ENCODE measurements at regions of chr15 and their contacts with region 1.

Region 1: DNA sequence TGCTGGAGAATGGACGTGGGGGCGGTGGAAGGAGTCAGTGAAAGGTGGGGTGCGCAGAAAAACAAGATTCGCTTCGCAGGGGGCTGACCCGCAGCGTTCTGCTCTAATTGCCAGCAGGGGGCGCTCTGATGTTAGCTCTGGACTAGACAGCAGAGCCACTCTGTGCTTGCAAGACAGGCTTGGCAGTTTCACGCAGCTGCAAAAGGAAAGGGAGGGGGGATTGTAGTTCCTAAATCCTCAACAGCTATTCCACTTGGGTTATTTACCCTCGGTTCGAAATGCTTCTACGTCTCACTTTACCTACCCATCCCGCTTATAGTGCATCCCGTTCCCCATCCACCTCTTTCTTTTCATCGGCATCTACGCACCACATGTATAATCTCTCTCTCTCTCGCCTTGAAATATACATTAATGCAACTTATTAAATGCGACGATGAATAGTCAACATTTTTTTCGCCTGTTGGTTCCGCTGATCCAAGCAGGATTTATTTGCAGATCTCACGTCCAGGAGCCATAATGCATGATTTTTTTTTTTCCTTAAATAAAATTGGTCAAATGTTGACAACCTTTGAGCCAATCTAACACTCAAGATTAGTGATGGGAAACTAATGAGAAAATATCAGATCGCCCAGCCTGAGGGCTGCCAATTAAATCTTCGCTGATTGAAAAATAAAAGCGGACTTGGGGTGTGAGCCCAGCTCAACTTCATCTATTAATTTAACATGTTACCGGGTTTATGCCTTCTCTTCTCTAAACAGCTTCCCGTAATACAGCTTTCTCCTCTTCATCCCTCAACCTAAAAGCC is 216.4 kb downstream of the MEIS2 start:
- DNase-seq: peak in 1 of 2 donors; percentile 88
- H3K4me3 ChIP-seq: peak overlapping the region; percentile 40 to 47
- H3K27ac ChIP-seq: no peak overlapping the region
- H3K4me1 ChIP-seq: peaks cover 0 to 6% of the 10 kb centered on the region in 2 donors
- H3K27me3 ChIP-seq: no peaks in the 10 kb centered on the region
- CTCF ChIP-seq: peak; percentile 78 to 86 (median 80)

Region 2: DNA sequence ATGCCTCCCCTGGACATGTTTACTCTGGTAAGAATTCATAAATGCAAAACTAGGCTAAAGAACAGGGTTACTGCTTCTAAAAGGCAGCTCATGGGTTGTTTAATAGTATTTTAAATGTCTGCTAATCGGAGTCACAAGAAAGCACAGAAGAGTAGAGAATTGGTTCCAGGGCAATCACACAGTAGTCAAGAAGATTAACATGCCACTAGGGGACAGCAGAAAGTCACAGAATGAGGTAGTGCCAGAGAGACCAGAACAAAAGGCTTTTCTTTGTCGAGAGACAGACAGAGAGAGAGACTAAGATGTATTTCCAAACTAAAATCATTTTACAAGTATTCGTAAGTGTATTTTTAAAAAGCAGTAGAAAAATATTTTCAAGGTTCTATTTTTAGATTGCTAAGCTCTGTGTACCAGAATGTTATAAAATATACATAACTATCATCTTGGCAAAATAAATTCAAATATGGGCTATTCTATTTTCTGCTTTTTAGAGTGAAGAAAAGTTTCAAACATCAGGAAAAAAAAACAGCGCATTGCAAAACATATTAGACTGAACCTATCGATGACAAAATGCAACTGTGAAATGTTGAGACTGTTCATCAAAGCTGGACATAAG is 382.7 kb before region 1 on chr15:
- intact Hi-C with region 1: loop called (anchors 5 kb)
- DNase-seq: no peak
- H3K4me3 ChIP-seq: no peak overlapping the region
- H3K27ac ChIP-seq: no peak overlapping the region
- H3K4me1 ChIP-seq: peaks cover 0 to 12% of the 10 kb centered on the region in 2 donors
- H3K27me3 ChIP-seq: no peaks in the 10 kb centered on the region
- CTCF ChIP-seq: peak; percentile 7 to 80 (median 76)

Region 3: DNA sequence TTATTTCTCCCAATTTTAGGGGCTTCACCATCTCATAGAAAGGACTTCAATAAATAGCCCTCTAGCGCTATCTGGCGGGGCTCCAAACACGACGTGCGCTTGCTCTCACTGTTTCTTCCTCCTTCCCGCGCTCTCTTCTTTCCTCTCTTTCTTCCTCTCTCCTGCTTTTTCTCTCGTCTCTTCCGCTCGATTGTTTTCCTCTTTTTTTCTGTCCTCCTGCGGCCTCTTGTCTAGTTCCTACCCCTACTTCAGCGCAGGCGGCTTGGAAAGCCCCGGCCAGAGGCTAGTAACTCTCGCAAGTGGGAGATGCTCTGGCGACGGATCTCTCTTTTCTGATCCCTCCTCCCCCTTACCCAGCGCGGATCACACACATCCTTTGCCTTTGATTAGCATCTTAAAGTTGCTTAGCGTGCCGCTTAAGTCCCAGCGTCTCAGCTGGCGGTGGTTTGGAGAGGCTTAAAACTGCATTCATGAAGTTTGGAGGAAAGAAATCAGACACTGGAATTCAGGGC is 222.6 kb after region 1 on chr15:
- intact Hi-C with region 1: loop called (anchors 2 kb)
- DNase-seq: no peak
- H3K4me3 ChIP-seq: peak overlapping the region; percentile 31 to 56
- H3K27ac ChIP-seq: no peak overlapping the region
- H3K4me1 ChIP-seq: peaks cover 0 to 6% of the 10 kb centered on the region in 2 donors
- H3K27me3 ChIP-seq: no peaks in the 10 kb centered on the region
- CTCF ChIP-seq: peak in 1 of 3 experiments; percentile 12

Region 4: DNA sequence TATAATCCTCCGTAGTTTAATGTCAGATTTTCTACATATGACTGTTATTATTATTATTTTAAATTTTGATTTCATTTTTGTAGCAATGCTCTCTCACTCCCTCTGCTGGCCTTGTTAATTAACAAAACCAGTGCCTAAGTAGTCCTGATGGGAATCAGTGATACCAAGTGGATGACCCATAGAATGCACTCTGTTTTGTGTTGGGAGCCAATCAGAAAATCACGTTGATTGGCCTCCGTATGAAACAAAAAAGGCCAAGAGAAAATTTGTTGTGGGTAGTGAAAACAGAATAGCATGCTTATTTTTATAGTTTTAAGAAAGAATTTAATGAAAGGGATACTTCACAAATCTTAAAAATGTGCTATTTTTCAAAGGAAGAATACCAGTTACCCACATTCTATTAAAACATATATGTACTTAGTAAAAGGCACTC is 250.8 kb after region 1 on chr15:
- intact Hi-C with region 1: loop called (anchors 1 kb)
- DNase-seq: no peak
- H3K4me3 ChIP-seq: no peak overlapping the region
- H3K27ac ChIP-seq: no peak overlapping the region
- H3K4me1 ChIP-seq: no peaks in the 10 kb centered on the region
- H3K27me3 ChIP-seq: no peaks in the 10 kb centered on the region
- CTCF ChIP-seq: peak; percentile 30 to 77 (median 75)

Measured in ascending aorta (tissue), 2 donors.